Calu3 (cell line): ENCODE measurements at regions of chr14 and their contacts with region 1.

Region 1: GRCh38 chr14:51996148-51996746 is 6.9 kb downstream of the RTRAF start:
- DNase-seq: no peak
- H3K4me3 Mint-ChIP-seq: no peak overlapping the region
- H3K27ac Mint-ChIP-seq: no peak overlapping the region
- H3K4me1 Mint-ChIP-seq: peaks cover 9% of the 10 kb centered on the region
- H3K27me3 Mint-ChIP-seq: no peaks in the 10 kb centered on the region
- CTCF ChIP-seq: peak; percentile 31

Region 2: GRCh38 chr14:52131640-52132320 is 135.5 kb after region 1 on chr14:
- CTCF ChIA-PET with region 1: no interaction called
- intact Hi-C with region 1: loop called (anchors 1 kb)
- DNase-seq: peak; percentile 84
- H3K4me3 Mint-ChIP-seq: no peak overlapping the region
- H3K27ac Mint-ChIP-seq: no peak overlapping the region
- H3K4me1 Mint-ChIP-seq: no peaks in the 10 kb centered on the region
- H3K27me3 Mint-ChIP-seq: peaks cover 26% of the 10 kb centered on the region
- CTCF ChIP-seq: peak; percentile 46